Uterus (tissue), 4 donors: ENCODE measurements at regions of chr20 and their contacts with region 1.

Region 1: GRCh38 chr20:1313236-1313964 is 15.5 kb downstream of the SDCBP2 start:
- DNase-seq: peak; percentile 75 to 84
- H3K4me3 ChIP-seq: no peak overlapping the region
- H3K27ac ChIP-seq: peak overlapping the region in 1 of 2 donors; percentile 24
- H3K4me1 ChIP-seq: peaks cover 0 to 3% of the 10 kb centered on the region in 2 donors
- H3K27me3 ChIP-seq: no peaks in the 10 kb centered on the region
- CTCF ChIP-seq: peak; percentile 95 to 100 (median 96)
- POLR2A ChIP-seq: no peak

Region 2: DNA sequence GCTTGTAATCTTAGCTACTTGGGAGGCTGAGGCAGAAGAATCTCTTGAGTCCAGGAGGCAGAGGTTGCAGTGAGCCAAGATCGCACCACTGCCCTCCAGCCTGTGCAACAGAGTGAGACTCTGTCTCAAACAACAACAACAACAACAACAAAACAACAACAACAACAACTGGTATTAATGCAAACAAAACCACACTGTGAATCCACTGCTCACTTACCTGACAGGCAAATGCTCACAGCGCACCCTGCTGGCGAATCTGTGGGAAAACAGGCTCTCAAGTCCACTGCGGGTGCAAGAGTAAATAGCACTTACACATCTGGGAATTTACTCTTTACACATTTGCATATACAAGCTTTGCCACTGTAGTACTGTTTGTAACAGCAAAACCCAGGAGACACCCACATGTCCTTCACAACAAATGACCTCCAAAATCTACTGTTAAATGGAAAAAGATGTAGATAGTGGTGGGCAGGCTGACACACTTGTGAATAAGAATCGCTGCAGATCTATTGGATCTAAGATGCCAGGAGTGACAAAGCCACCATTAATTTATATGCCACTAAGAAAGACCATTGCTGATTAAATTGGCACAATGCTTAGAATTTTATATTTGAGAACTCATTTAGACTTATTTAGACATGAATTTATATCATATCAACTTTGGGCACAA is 124.0 kb after region 1 on chr20:
- intact Hi-C with region 1: loop called (anchors 5 kb)
- DNase-seq: peak; percentile 69 to 70
- H3K4me3 ChIP-seq: no peak overlapping the region
- H3K27ac ChIP-seq: no peak overlapping the region
- H3K4me1 ChIP-seq: no peaks in the 10 kb centered on the region
- H3K27me3 ChIP-seq: no peaks in the 10 kb centered on the region
- CTCF ChIP-seq: peak; percentile 75 to 83 (median 78)
- POLR2A ChIP-seq: no peak

Region 3: DNA sequence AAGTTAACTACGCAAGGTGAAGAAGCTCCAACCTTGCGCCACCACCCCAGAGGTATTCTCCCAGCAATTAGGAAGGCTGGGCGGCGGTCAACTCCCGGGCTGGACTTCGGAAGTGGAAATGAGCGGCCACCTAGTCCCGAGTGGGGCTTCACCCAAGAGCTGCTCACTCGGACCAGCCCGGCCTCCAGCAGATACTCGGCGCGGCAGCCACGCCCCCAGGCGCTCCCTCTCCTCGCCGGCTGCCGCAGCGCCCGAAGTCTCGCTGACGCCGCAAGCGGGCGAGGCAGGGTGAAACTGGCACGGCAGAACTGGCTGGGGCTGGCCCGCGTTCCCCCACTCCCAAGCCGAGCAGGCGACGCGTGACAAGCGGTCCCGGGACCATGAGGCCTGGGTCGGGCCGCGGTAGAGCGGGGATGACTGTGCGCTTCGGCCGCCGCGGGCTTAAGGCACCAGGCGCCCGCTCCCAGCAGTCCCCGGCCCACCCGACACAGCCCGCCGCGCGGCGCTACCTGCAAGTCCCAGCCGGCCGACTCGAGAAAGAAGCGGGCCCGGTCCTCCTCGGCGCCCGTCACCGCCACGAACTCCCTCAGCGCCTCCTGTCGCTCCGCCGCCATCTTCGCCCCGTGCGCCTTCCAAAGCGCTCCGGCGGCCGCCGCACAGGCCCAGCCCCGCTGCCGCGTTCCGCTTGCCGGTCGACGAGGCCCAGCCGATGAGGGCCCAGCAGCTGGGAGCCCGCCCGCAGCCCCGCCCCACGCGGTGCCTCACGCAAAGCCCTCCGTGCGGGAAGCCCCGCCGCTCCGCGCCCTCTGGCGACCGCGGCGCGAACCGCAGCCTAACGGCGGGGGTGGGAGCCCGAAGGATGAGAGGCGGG is 153.0 kb after region 1 on chr20 and contains the start of gene NSFL1C:
- intact Hi-C with region 1: loop called (anchors 10 kb)
- DNase-seq: peak; percentile 92 to 96
- H3K4me3 ChIP-seq: peak within 1 kb of the TSS; percentile 86 to 91
- H3K27ac ChIP-seq: peak within 1 kb of the TSS; percentile 79 to 81
- H3K4me1 ChIP-seq: peaks cover 0 to 14% of the 10 kb centered on the region in 2 donors
- H3K27me3 ChIP-seq: no peaks in the 10 kb centered on the region
- CTCF ChIP-seq: peak; percentile 86 to 100 (median 99)
- POLR2A ChIP-seq: peak; percentile 30 to 80
- total RNA-seq, gene NSFL1C: 18.7 to 67.8 (median 35.8) TPM